Activated CD4-positive, alpha-beta T cell treated with anti-CD3 and anti-CD28 coated beads for 36 hours (primary cell): ENCODE measurements at regions of chr5 and their contacts with region 1.

Region 1: DNA sequence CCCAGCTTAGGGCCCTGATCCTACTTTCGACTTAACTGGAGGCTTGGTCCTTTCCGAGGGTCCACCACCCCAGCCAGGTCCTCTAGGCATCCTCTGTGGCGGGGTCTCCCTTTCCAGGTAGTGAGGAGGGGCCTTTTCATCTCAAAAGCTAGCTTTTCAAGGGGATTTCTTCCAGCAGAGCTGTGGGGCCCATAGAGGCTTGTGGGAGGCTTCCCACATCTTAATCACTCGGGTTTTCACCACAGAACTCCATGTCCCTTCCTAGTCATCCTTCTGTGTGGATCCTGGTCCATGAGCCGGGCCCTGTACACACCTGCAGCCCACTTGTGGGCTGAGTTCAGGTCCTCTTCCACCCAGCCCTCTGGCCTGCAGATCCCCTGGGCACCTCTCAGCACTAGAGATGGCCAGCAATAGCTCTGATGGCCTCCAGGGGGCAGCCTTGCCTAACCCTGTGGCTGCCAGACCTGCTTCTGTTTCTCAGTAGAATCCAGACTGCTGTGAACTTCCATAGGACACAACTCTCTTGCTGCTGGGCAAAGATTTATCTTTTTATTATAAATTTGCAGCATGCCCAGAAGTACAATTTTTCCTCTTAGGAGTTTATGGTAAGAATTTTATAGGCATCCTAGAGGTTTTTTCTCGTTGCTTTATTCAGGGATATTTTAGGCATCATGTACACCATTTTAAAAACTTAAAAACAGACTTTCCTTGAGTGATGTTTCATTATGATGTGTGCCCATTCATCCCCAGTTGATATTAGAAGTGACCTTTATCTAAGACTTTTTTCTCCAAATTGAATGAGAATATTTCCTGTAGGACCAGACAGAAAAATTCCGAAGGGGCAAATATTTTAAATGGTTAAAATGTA is 208.9 kb downstream of the TRIO start:
- DNase-seq: peak; percentile 75
- ATAC-seq: peak; percentile 91
- H3K4me3 Mint-ChIP-seq: no peak overlapping the region
- H3K27ac Mint-ChIP-seq: no peak overlapping the region
- H3K4me1 Mint-ChIP-seq: no peaks in the 10 kb centered on the region
- H3K27me3 Mint-ChIP-seq: no peaks in the 10 kb centered on the region

Region 2: GRCh38 chr5:13987843-13988464 is 364.1 kb before region 1 on chr5:
- CTCF ChIA-PET with region 1: interaction called, 3 read pairs
- POLR2A ChIA-PET with region 1: no interaction called
- intact Hi-C with region 1: loop called in 1 of 2 experiments (anchors 5 kb)
- DNase-seq: peak; percentile 61
- ATAC-seq: no peak
- H3K4me3 Mint-ChIP-seq: no peak overlapping the region
- H3K27ac Mint-ChIP-seq: no peak overlapping the region
- H3K4me1 Mint-ChIP-seq: no peaks in the 10 kb centered on the region
- H3K27me3 Mint-ChIP-seq: peaks cover 4% of the 10 kb centered on the region

Region 3: GRCh38 chr5:14292766-14293658 is 59.1 kb before region 1 on chr5:
- CTCF ChIA-PET with region 1: no interaction called
- POLR2A ChIA-PET with region 1: no interaction called
- intact Hi-C with region 1: no loop called
- DNase-seq: no peak
- ATAC-seq: no peak
- H3K4me3 Mint-ChIP-seq: no peak overlapping the region
- H3K27ac Mint-ChIP-seq: no peak overlapping the region
- H3K4me1 Mint-ChIP-seq: no peaks in the 10 kb centered on the region
- H3K27me3 Mint-ChIP-seq: no peaks in the 10 kb centered on the region

Region 4: GRCh38 chr5:14364576-14365472 is 12.7 kb after region 1 on chr5:
- CTCF ChIA-PET with region 1: interaction called, 10 read pairs
- POLR2A ChIA-PET with region 1: no interaction called
- intact Hi-C with region 1: no loop called
- DNase-seq: peak; percentile 42
- ATAC-seq: peak; percentile 33
- H3K4me3 Mint-ChIP-seq: no peak overlapping the region
- H3K27ac Mint-ChIP-seq: no peak overlapping the region
- H3K4me1 Mint-ChIP-seq: peaks cover 23% of the 10 kb centered on the region
- H3K27me3 Mint-ChIP-seq: no peaks in the 10 kb centered on the region

Region 5: DNA sequence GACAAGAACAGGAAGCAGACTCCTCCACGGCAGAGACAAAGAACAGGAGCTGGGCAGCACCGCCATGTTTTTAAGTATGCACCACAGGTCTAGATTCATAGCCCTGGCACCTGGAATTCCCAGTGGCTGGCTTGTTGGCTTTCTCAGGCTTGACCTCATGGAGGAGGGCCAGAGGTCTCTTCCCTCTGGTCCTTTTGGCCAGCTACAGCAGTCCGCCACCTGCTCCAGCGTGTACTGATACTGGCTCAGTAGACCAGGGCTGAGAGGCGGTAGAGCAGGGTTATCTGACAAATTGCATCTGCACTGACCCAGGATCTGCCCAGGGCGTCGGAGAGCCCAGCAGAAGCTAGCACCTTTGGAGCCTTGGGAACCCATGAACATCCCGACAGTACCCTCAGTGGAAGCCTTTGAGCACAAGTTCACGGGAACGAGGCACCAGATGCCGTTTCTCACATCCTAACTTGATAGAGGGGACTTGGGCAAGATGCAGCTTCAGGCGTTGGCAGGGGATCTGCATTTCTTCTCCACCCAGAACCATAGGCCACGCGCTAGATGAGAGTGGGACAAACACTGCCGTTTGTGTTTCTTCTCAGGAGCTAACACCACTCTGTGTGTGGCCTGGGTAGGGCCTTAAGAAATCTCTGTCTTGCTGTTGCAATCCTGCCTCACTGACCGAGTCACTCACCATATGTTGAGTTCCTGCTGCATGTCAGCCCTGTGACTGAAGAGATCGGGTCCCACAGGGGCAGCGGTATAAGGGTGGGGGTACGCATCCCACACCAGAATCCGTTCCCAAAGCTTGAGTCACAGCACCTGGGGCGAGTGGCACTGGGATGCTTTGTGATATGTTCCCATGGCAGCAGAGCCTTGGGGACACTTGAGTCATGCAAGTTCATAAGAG is 139.2 kb after region 1 on chr5:
- CTCF ChIA-PET with region 1: no interaction called
- POLR2A ChIA-PET with region 1: no interaction called
- intact Hi-C with region 1: no loop called
- DNase-seq: no peak
- ATAC-seq: no peak
- H3K4me3 Mint-ChIP-seq: no peak overlapping the region
- H3K27ac Mint-ChIP-seq: no peak overlapping the region
- H3K4me1 Mint-ChIP-seq: no peaks in the 10 kb centered on the region
- H3K27me3 Mint-ChIP-seq: no peaks in the 10 kb centered on the region

Region 6: DNA sequence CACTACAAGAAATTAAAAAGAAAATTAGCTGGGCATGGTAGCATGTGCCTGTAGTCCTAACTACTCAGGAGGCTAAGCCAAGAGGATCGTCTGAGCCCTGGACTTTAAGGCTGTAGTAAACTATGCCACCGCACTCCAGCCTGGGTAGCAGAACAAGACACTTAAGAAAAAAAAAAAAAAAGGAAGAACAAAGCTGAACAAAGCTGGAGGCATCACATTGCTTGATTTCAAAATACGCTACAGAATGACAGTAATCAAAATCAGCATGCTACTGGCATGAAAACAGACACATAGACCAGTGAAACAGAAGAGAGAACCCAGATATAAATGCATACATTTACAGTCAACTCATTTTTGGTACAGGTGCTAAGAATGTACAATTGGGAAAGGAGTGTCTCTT is 298.0 kb after region 1 on chr5:
- CTCF ChIA-PET with region 1: interaction called, 47 read pairs
- POLR2A ChIA-PET with region 1: interaction called, 3 read pairs
- intact Hi-C with region 1: loop called (anchors 1 kb)
- DNase-seq: no peak
- ATAC-seq: no peak
- H3K4me3 Mint-ChIP-seq: no peak overlapping the region
- H3K27ac Mint-ChIP-seq: no peak overlapping the region
- H3K4me1 Mint-ChIP-seq: peaks cover under 1% of the 10 kb centered on the region
- H3K27me3 Mint-ChIP-seq: peaks cover 7% of the 10 kb centered on the region

Region 7: DNA sequence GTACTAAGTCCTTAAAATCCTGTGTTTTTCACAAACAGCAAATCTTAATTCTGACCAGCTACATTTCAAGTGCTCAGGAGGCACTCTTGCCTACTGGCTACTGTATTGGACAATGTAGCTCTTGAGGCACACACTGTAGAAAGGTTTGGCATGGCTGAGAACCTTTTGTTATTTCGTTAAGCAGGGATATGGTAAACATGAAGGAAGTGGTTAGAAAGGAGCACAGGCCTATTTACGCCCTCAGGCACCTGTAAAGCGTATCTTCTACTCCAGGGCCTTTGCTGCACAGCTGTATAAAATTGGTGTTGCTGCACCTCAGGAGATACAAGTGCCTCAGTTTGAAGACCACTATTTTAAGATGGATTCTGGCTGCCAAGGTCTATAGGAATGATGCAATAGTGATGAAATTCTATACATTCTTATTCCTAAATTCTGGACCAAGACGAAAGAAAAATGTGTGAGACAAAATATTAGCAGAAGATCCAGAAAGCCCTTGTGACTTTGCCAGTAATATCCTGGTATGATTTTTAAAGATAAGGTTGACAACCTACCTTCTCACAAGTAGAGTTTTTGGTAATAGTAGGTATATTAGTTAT is 303.2 kb after region 1 on chr5:
- CTCF ChIA-PET with region 1: interaction called, 12 read pairs
- POLR2A ChIA-PET with region 1: no interaction called
- intact Hi-C with region 1: no loop called
- DNase-seq: no peak
- ATAC-seq: no peak
- H3K4me3 Mint-ChIP-seq: no peak overlapping the region
- H3K27ac Mint-ChIP-seq: no peak overlapping the region
- H3K4me1 Mint-ChIP-seq: peaks cover 32% of the 10 kb centered on the region
- H3K27me3 Mint-ChIP-seq: peaks cover 2% of the 10 kb centered on the region

Region 8: DNA sequence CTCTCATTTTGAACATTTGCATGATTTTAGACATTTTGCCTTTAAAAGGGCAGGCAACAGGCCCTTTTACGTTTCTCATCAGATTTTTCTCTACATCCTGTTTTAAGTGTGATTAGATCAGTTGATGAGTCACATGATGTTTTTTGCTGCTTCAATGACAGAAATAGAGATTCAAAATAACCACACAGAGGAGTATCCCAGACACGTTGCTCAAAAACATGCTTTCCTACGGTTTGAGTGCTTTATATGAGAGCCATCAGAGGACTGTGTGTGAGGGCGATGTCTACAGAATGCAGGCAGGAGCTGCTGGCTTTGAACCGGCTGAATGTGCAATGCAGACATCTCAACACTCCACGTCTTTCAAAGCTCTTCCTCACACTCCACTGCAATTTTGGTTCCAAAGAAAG is 354.5 kb after region 1 on chr5:
- CTCF ChIA-PET with region 1: no interaction called
- POLR2A ChIA-PET with region 1: no interaction called
- intact Hi-C with region 1: no loop called
- DNase-seq: peak; percentile 51
- ATAC-seq: peak; percentile 95
- H3K4me3 Mint-ChIP-seq: peak overlapping the region; percentile 48
- H3K27ac Mint-ChIP-seq: peak overlapping the region; percentile 98
- H3K4me1 Mint-ChIP-seq: peaks cover 83% of the 10 kb centered on the region
- H3K27me3 Mint-ChIP-seq: no peaks in the 10 kb centered on the region